Caco-2 (cell line): ENCODE measurements at regions of chr5 and their contacts with region 1.

Region 1: DNA sequence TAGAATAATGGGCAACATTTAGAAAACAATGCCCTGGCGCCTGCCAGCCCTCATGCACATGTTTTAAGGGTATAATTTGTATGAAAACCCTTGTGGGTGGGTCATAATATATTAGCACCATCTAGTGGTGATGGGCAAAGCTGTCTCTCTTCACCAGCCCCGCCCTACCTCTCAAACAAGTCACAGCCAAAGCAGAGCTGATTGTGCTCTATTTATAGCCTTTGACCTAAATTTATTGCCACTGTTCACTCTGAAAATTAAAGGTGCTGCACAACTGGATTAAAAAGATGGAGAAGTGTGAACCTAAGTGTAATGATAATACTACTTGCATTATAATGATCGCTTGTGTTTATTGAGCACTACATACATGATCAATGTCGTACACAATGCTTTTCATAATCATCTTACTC is 131.9 kb upstream of the ANKH start:
- DNase-seq: peak; percentile 55 to 58
- H3K4me3 ChIP-seq: no peak overlapping the region
- H3K4me3 Mint-ChIP-seq: no peak overlapping the region
- H3K27ac Mint-ChIP-seq: no peak overlapping the region
- H3K4me1 ChIP-seq: peaks cover 5% of the 10 kb centered on the region
- H3K4me1 Mint-ChIP-seq: peaks cover 5% of the 10 kb centered on the region
- H3K27me3 ChIP-seq: no peaks in the 10 kb centered on the region
- H3K27me3 Mint-ChIP-seq: peaks cover 12% of the 10 kb centered on the region
- CTCF ChIP-seq: peak; percentile 68 to 79

Region 2: DNA sequence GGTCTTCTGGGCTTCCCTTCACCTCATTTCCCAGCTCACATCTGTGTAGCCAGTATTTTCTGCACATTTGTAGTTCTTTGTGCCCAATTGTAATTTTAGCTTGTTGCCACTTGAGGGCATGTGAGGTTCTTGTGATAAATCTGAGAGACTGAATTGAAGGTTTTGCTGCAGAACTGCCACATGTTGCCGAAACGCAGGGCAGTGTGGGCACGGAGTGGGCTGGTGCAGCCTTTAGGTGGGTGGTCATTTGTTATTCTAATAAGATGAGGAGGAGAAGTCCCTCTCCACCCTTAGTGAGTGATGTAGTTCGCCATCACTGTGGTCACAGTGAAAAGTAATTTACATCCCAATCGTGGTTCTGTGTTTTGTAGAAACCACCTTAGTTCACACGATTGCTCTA is 317.8 kb before region 1 on chr5:
- CTCF ChIA-PET with region 1: no interaction called
- POLR2A ChIA-PET with region 1: no interaction called
- intact Hi-C with region 1: loop called (anchors 2 kb)
- DNase-seq: peak in 1 of 2 experiments; percentile 35
- H3K4me3 ChIP-seq: no peak overlapping the region
- H3K4me3 Mint-ChIP-seq: no peak overlapping the region
- H3K27ac Mint-ChIP-seq: peak overlapping the region; percentile 37
- H3K4me1 ChIP-seq: no peaks in the 10 kb centered on the region
- H3K4me1 Mint-ChIP-seq: no peaks in the 10 kb centered on the region
- H3K27me3 ChIP-seq: no peaks in the 10 kb centered on the region
- H3K27me3 Mint-ChIP-seq: no peaks in the 10 kb centered on the region
- CTCF ChIP-seq: peak; percentile 68 to 78

Region 3: DNA sequence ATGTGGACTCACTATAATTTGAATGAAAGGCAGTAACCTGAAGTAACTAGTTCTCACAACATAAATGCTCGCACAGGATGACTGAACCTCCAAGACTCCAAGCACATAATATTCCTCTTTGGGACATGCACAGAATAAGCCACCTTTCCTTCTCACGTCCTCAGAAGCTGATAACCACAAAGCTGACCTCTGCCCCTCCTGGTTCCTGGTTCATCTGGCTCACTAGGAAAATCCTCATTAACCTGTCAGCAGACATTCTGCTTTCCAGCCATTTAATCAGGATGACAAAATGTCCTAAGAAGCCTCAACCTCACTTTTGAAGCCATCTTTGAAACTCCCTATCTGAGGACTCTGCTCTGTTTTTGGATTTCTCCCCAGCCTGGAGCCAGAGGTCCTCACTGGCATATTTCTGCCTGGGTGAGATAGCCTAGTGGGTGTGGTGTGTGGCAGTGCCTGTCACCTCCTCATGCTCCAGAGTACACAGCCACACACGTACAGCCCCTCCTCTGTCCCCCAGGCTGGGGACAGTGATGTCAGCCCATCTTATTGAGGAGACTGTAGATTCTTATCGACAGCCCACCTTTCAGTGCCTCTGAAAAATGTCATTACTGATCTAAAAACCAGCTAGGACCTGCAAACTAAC is 142.3 kb before region 1 on chr5:
- CTCF ChIA-PET with region 1: no interaction called
- POLR2A ChIA-PET with region 1: no interaction called
- intact Hi-C with region 1: no loop called
- DNase-seq: no peak
- H3K4me3 ChIP-seq: no peak overlapping the region
- H3K4me3 Mint-ChIP-seq: no peak overlapping the region
- H3K27ac Mint-ChIP-seq: no peak overlapping the region
- H3K4me1 ChIP-seq: peaks cover 6% of the 10 kb centered on the region; the same call in 1 of the 2 replicates
- H3K4me1 Mint-ChIP-seq: no peaks in the 10 kb centered on the region
- H3K27me3 ChIP-seq: no peaks in the 10 kb centered on the region
- H3K27me3 Mint-ChIP-seq: no peaks in the 10 kb centered on the region
- CTCF ChIP-seq: no peak

Region 4: GRCh38 chr5:14871210-14872069 is 132.1 kb before region 1 on chr5 and contains the start of gene ANKH:
- CTCF ChIA-PET with region 1: no interaction called
- POLR2A ChIA-PET with region 1: no interaction called
- intact Hi-C with region 1: loop called (anchors 5 kb)
- DNase-seq: peak; percentile 61 to 86
- H3K4me3 ChIP-seq: peak within 1 kb of the TSS; percentile 67
- H3K4me3 Mint-ChIP-seq: peak within 1 kb of the TSS; percentile 70
- H3K27ac Mint-ChIP-seq: no peak within 1 kb of the TSS
- H3K4me1 ChIP-seq: no peaks in the 10 kb centered on the region
- H3K4me1 Mint-ChIP-seq: peaks cover 13% of the 10 kb centered on the region
- H3K27me3 ChIP-seq: peaks cover 2% of the 10 kb centered on the region
- H3K27me3 Mint-ChIP-seq: peaks cover 19% of the 10 kb centered on the region
- CTCF ChIP-seq: peak in 1 of 2 experiments; percentile 16
- total RNA-seq, gene ANKH: 4.7 and 6.3 TPM in 2 replicates

Region 5: GRCh38 chr5:14946815-14947640 is 56.5 kb before region 1 on chr5:
- CTCF ChIA-PET with region 1: no interaction called
- POLR2A ChIA-PET with region 1: no interaction called
- intact Hi-C with region 1: loop called (anchors 1 kb)
- DNase-seq: peak in 1 of 2 experiments; percentile 43
- H3K4me3 ChIP-seq: no peak overlapping the region
- H3K4me3 Mint-ChIP-seq: no peak overlapping the region
- H3K27ac Mint-ChIP-seq: no peak overlapping the region
- H3K4me1 ChIP-seq: no peaks in the 10 kb centered on the region
- H3K4me1 Mint-ChIP-seq: no peaks in the 10 kb centered on the region
- H3K27me3 ChIP-seq: no peaks in the 10 kb centered on the region
- H3K27me3 Mint-ChIP-seq: no peaks in the 10 kb centered on the region
- CTCF ChIP-seq: peak; percentile 48 to 63

Region 6: DNA sequence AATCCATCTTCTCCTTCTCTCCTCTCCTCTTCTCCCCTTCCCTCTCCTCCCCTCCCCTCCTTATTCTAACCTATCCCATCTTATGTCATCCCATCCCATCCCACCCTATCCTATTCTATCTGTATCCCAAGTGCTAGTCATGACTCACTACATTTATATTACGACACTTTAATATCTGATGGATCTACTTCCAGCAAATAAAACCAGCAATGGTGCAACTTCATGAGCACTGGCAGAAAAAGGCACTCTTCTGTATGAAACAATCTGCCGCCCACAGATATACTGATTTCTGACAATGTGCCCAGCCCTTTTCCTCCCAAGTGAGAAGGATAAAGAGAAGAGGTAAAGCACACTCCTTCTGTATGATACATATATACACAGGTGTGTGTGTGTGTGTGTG is 45.3 kb before region 1 on chr5:
- CTCF ChIA-PET with region 1: interaction called, 18 read pairs
- POLR2A ChIA-PET with region 1: no interaction called
- intact Hi-C with region 1: loop called (anchors 1 kb)
- DNase-seq: no peak
- H3K4me3 ChIP-seq: no peak overlapping the region
- H3K4me3 Mint-ChIP-seq: no peak overlapping the region
- H3K27ac Mint-ChIP-seq: no peak overlapping the region
- H3K4me1 ChIP-seq: no peaks in the 10 kb centered on the region
- H3K4me1 Mint-ChIP-seq: no peaks in the 10 kb centered on the region
- H3K27me3 ChIP-seq: no peaks in the 10 kb centered on the region
- H3K27me3 Mint-ChIP-seq: peaks cover 3% of the 10 kb centered on the region
- CTCF ChIP-seq: no peak